K562 (cell line): ENCODE measurements at regions of chr2 and their contacts with region 1.

Region 1: DNA sequence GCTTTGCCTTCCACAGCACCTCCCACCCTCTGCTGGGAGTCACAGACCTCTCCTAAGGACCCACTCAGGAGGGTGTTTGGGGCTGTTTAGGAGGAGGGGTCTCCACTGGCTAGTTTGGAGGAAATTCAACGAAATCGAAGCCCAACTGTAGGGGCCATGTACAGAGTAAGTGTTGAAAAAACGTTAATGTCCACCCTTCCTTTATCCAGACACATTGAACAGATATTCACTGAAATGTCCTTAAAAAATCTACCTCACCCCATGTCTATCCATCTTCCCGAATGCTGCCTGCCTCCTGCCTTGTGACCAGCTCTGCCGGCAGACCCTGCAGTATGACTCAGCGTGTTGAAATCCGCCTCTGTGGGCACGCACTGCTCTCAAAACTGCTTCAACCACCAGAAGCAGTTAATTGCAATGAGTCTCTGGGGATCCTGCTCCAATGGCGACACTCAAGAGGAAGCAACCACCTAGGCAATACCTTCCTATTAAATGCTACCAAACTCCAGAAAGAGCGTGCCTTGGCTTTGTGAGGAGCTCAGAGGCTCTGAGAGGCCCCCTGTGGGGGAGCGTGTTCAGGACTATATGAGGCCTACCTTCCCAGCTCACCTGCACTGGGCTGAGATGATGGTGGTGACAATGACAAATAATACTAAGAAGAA is 61.4 kb upstream of the RTN4 start:
- DNase-seq: peak; percentile 46 to 87 (median 50)
- ATAC-seq: peak; percentile 62
- H3K4me3 ChIP-seq: no peak overlapping the region
- H3K27ac ChIP-seq: peak overlapping the region; percentile 78
- H3K4me1 ChIP-seq: peaks cover 20 to 71% of the 10 kb centered on the region in 2 experiments
- H3K27me3 ChIP-seq: no peaks in the 10 kb centered on the region
- CTCF ChIP-seq: no peak
- EP300 ChIP-seq: peak; percentile 52
- POLR2A ChIP-seq: peak; percentile 55
- RAD21 ChIP-seq: peak in 1 of 2 experiments; percentile 13; a peak in 2 of 4 replicates

Region 2: GRCh38 chr2:55099878-55100820 is 11.6 kb before region 1 on chr2:
- CTCF ChIA-PET with region 1: no interaction called
- POLR2A ChIA-PET with region 1: interaction called, 12 read pairs
- in situ Hi-C with region 1: no loop called
- intact Hi-C with region 1: no loop called
- DNase-seq: no peak
- ATAC-seq: peak; percentile 57
- H3K4me3 ChIP-seq: no peak overlapping the region
- H3K27ac ChIP-seq: peak overlapping the region; percentile 58
- H3K4me1 ChIP-seq: peaks cover 4 to 39% of the 10 kb centered on the region in 2 experiments; a peak in 4 of 5 replicates
- H3K27me3 ChIP-seq: no peaks in the 10 kb centered on the region
- CTCF ChIP-seq: no peak
- EP300 ChIP-seq: peak; percentile 59
- POLR2A ChIP-seq: no peak
- RAD21 ChIP-seq: peak in 1 of 2 experiments; percentile 33; a peak in 2 of 4 replicates

Region 3: GRCh38 chr2:55133467-55134315 is 22.0 kb after region 1 on chr2:
- CTCF ChIA-PET with region 1: no interaction called
- POLR2A ChIA-PET with region 1: interaction called, 26 read pairs
- in situ Hi-C with region 1: no loop called
- intact Hi-C with region 1: no loop called
- DNase-seq: peak; percentile 39 to 75 (median 52)
- ATAC-seq: peak; percentile 76
- H3K4me3 ChIP-seq: peak overlapping the region; percentile 5; the same call in 1 of the 2 replicates
- H3K27ac ChIP-seq: peak overlapping the region; percentile 88
- H3K4me1 ChIP-seq: peaks cover 30 to 48% of the 10 kb centered on the region in 2 experiments
- H3K27me3 ChIP-seq: no peaks in the 10 kb centered on the region
- CTCF ChIP-seq: no peak
- EP300 ChIP-seq: peak; percentile 36
- POLR2A ChIP-seq: peak; percentile 44; the same call in 1 of the 2 replicates
- RAD21 ChIP-seq: no peak

Region 4: GRCh38 chr2:55141572-55142413 is 30.1 kb after region 1 on chr2:
- CTCF ChIA-PET with region 1: no interaction called
- POLR2A ChIA-PET with region 1: interaction called, 26 read pairs
- in situ Hi-C with region 1: no loop called
- intact Hi-C with region 1: loop called (anchors 1 kb)
- DNase-seq: peak in 2 of 4 experiments; percentile 28 to 47
- ATAC-seq: peak; percentile 8
- H3K4me3 ChIP-seq: no peak overlapping the region
- H3K27ac ChIP-seq: peak overlapping the region; percentile 96
- H3K4me1 ChIP-seq: peaks cover 38 to 61% of the 10 kb centered on the region in 2 experiments
- H3K27me3 ChIP-seq: no peaks in the 10 kb centered on the region
- CTCF ChIP-seq: no peak
- EP300 ChIP-seq: no peak
- POLR2A ChIP-seq: no peak
- RAD21 ChIP-seq: 0 out of 4 replicates have a peak, but pooled peaks of 1 of the 2 experiments have one; percentile 15

Region 5: DNA sequence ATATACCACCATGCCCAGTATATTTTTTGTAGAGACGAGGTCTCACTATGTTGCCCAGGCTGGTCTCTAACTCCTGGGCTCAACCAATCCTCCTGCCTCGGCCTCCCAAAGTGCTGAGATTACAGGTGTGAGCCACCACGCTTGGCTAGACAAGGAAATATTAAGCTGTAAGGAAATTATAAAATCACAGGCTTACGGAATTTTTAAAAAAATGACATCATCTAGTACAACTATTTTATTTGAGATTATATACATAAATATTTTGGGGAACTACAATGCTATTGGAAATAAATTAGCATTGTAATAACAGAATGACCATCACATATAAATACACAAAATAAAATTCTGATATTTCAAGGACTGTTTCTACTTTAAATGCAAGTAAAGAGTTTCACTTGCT is 463.9 kb after region 1 on chr2:
- CTCF ChIA-PET with region 1: no interaction called
- POLR2A ChIA-PET with region 1: no interaction called
- in situ Hi-C with region 1: no loop called
- intact Hi-C with region 1: no loop called
- DNase-seq: no peak
- ATAC-seq: no peak
- H3K4me3 ChIP-seq: no peak overlapping the region
- H3K27ac ChIP-seq: no peak overlapping the region
- H3K4me1 ChIP-seq: no peaks in the 10 kb centered on the region
- H3K27me3 ChIP-seq: no peaks in the 10 kb centered on the region
- CTCF ChIP-seq: no peak
- EP300 ChIP-seq: no peak
- POLR2A ChIP-seq: no peak
- RAD21 ChIP-seq: no peak